Activated naive CD4-positive, alpha-beta T cell treated with anti-CD3 and anti-CD28 coated beads for 36 hours (primary cell): ENCODE measurements at regions of chr12 and their contacts with region 1.

Region 1: GRCh38 chr12:52156736-52157565 is 34.9 kb downstream of the KRT80 start:
- DNase-seq: peak; percentile 83
- H3K4me3 Mint-ChIP-seq: no peak overlapping the region
- H3K27ac Mint-ChIP-seq: no peak overlapping the region
- H3K4me1 Mint-ChIP-seq: peaks cover 26% of the 10 kb centered on the region
- H3K27me3 Mint-ChIP-seq: no peaks in the 10 kb centered on the region

Region 2: DNA sequence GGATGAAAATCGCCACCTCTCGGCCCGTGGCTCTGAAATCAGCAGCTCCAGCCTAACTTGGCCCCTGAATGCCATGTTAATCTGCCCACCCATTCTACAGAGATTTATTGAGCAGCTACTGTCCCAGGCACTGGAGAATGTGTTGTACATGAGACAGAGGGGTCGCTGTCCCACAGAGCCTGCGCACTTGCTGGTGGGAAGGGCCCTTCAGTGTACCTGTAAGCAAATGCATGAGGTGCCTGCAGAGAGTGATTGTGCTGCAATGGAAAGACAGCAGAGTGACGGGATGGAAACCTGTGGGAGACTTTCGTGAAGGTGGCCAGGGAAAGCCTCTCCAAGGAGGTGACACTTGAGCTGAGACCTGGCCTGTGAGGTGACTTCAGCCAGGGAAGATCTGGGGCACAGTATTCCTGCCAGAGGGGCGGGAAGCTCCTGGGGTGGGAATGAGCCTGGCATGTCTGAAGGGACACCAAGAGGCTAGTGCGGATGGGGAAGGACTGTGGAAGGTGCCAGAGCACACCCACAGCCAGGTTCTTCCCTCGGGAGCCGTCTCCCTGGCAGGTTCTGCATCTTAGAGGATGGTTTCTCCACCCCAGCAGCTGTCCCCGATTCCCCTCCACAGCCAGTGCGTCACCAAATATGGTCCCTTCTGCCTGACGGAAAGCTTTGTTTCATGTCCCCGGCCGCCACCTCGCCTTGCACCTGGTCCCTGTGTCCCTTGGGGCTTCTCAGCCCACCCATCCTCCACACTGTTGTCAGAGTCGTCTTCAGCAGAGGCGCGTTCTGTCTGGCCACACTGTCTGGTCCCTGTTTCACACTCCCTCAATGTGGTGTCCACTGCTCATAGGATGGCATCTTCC is 68.8 kb before region 1 on chr12:
- CTCF ChIA-PET with region 1: no interaction called
- intact Hi-C with region 1: no loop called
- DNase-seq: no peak
- H3K4me3 Mint-ChIP-seq: no peak overlapping the region
- H3K27ac Mint-ChIP-seq: no peak overlapping the region
- H3K4me1 Mint-ChIP-seq: peaks cover 2% of the 10 kb centered on the region
- H3K27me3 Mint-ChIP-seq: peaks cover 30% of the 10 kb centered on the region

Region 3: DNA sequence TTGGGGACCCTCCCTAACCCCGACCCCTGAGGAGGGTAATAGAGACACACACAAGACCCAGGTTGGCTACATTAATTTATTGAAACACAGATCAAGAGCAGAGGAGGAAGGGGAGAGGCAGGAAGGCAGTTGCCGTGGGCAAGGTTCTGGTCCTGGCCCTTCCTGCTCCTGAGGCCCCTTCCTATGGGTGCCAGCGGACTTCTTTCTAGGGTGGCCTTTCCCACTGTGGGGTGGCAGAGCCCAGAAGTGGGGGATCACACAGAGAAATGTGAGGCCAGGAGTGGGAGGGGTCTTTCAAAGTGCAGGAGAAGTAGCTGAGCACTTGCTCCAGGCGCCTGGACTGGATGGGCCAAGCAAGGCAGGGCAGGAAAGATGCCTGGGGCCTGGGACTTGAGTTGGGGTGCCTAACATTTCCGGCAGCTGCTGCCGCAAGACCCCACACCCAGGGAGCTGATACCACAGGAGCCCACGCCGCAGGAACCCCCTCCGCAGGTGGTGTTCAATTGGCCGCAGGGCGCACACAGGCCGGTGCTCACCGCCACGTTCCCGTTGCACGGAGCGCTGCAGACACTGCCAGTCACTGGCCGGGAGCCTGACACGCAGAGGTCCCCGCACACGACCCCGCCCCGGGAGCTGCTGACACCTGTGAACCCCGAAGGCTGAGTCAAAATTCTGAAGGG is 129.0 kb after region 1 on chr12:
- CTCF ChIA-PET with region 1: no interaction called
- intact Hi-C with region 1: no loop called
- DNase-seq: no peak
- H3K4me3 Mint-ChIP-seq: no peak overlapping the region
- H3K27ac Mint-ChIP-seq: no peak overlapping the region
- H3K4me1 Mint-ChIP-seq: peaks cover 7% of the 10 kb centered on the region
- H3K27me3 Mint-ChIP-seq: no peaks in the 10 kb centered on the region

Region 4: GRCh38 chr12:52351196-52352059 is 194.5 kb after region 1 on chr12:
- CTCF ChIA-PET with region 1: no interaction called
- intact Hi-C with region 1: no loop called
- DNase-seq: peak; percentile 42
- H3K4me3 Mint-ChIP-seq: no peak overlapping the region
- H3K27ac Mint-ChIP-seq: no peak overlapping the region
- H3K4me1 Mint-ChIP-seq: peaks cover 15% of the 10 kb centered on the region
- H3K27me3 Mint-ChIP-seq: no peaks in the 10 kb centered on the region

Region 5: DNA sequence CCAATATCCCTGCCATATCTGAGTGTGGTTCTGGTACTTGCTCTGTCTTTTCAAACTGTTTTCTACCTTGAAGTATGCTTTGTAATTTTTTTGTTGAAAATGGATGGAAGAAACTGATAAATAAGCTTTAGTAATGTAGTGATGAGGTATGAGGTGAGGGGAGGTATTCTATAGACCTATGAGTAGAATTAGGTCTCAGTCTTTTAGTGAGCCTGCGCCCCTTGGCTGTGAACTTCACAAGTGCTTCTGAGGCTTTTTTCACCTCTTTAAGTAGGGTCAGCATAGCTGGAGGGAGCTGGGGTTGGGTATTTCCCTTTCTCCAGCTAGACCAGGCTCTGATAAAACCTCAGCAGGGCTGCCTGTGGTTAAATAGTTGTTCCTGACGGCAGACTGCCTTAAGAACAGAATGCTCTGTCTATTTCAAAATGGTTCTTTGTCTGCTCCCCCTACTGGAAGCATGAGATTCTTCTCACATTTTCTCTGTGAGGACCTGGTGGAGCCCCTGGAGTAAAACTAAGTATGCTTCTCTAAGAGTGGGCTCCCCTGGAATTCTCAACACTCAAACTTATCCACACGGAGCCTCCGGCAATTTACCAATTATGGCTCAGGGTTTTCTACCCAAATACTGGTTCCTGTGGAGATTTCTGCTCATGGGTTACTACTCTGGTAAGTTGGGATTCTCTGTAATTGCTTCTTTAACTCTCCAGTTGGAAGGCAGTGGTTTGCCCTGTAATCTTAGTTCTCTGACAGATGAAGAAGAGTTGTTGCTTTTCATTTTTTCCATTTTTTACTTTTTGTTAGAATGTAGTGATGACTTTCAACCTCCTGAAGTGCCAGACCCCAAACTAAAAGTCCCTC is 350.1 kb after region 1 on chr12:
- CTCF ChIA-PET with region 1: interaction called, 3 read pairs
- intact Hi-C with region 1: loop called (anchors 10 kb)
- DNase-seq: no peak
- H3K4me3 Mint-ChIP-seq: no peak overlapping the region
- H3K27ac Mint-ChIP-seq: no peak overlapping the region
- H3K4me1 Mint-ChIP-seq: peaks cover 3% of the 10 kb centered on the region
- H3K27me3 Mint-ChIP-seq: peaks cover 35% of the 10 kb centered on the region